Panc1 (cell line): ENCODE measurements at regions of chr7 and their contacts with region 1.

Region 1: DNA sequence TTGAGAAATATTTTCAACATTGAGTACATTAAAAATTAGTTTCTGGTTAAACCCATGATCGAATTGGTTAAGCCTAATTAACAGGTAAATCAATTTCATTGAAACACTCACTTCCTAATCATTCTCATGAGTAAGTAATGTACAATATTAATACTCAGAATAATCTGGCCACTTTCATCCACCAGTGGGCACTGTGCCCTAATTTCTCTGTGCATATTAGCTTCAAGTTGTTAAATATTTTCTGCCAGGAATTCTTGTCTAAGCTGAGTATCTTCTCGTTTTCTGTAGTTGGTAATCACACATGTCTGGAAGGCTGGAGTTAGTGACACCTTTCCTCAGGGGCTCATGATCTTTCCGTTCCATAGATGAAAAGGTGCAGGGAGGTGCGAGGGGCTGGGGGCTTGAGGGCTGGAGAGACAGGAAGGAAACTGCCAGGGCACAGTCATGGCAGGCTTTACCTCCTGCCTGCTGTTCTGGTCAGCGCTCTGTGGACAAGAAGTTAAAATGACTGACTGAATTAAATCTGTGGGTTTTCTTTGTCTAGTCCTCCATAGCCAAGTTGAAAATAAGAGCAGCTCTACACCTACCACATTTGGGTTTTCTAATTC is 71.9 kb downstream of the WIPF3 start:
- DNase-seq: peak; percentile 15
- ATAC-seq: peak; percentile 73
- H3K4me3 ChIP-seq: no peak overlapping the region
- H3K27ac ChIP-seq: no peak overlapping the region
- H3K4me1 ChIP-seq: no peaks in the 10 kb centered on the region
- H3K27me3 ChIP-seq: peaks cover 4% of the 10 kb centered on the region; the same call in 1 of the 2 replicates
- CTCF ChIP-seq: peak; percentile 74

Region 2: GRCh38 chr7:29900745-29901144 is 22.6 kb after region 1 on chr7:
- CTCF ChIA-PET with region 1: no interaction called
- POLR2A ChIA-PET with region 1: interaction called, 10 read pairs
- in situ Hi-C with region 1: no loop called
- intact Hi-C with region 1: no loop called
- DNase-seq: no peak
- ATAC-seq: peak; percentile 68
- H3K4me3 ChIP-seq: no peak overlapping the region
- H3K27ac ChIP-seq: no peak overlapping the region
- H3K4me1 ChIP-seq: no peaks in the 10 kb centered on the region
- H3K27me3 ChIP-seq: no peaks in the 10 kb centered on the region
- CTCF ChIP-seq: no peak

Region 3: DNA sequence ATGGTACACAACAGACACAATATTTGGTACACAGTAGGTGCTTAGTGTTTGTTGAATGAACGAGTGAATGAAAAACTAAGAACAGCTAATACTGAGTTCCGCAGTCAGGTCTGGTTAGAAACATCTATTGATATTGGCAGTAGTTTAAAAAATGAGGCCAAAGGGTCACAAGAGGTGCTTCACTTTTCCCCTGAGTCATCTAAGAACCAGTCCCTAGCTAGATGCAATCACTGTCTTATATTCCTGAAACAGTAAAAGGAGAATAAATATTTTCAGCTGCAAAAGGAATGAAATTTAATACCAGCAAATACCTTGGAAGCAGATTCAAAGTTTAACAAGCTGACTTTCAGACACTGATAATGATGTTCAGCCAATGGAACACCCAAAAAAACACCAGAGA is 56.9 kb after region 1 on chr7:
- CTCF ChIA-PET with region 1: no interaction called
- POLR2A ChIA-PET with region 1: no interaction called
- in situ Hi-C with region 1: no loop called
- intact Hi-C with region 1: no loop called
- DNase-seq: no peak
- ATAC-seq: no peak
- H3K4me3 ChIP-seq: no peak overlapping the region
- H3K27ac ChIP-seq: no peak overlapping the region
- H3K4me1 ChIP-seq: no peaks in the 10 kb centered on the region
- H3K27me3 ChIP-seq: no peaks in the 10 kb centered on the region
- CTCF ChIP-seq: no peak

Region 4: DNA sequence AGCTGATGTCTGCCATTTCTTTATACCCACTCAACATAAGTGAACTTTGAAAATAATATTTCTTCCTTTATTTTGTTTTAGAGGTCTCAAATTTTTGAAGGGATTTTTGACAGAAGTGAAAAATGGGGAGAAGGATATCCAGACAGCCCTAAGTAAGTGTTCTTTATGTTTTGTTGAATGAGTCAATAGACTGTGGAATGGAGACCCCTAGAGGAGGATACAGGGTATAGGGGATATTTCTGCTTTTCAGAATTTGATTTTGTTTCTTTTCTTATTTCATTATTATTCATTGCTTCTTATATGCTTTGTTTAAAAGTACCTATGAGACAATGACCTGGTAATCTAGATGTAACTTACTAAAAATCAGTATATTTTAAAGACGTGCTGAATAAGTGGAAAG is 184.4 kb after region 1 on chr7:
- CTCF ChIA-PET with region 1: interaction called, 9 read pairs
- POLR2A ChIA-PET with region 1: no interaction called
- in situ Hi-C with region 1: no loop called
- intact Hi-C with region 1: loop called (anchors 2 kb)
- DNase-seq: peak; percentile 17
- ATAC-seq: peak; percentile 85
- H3K4me3 ChIP-seq: no peak overlapping the region
- H3K27ac ChIP-seq: no peak overlapping the region
- H3K4me1 ChIP-seq: no peaks in the 10 kb centered on the region
- H3K27me3 ChIP-seq: no peaks in the 10 kb centered on the region
- CTCF ChIP-seq: peak; percentile 44; the same call in 1 of the 2 replicates